Caco-2 (cell line): ENCODE measurements at regions of chr1 and their contacts with region 1.

Region 1: GRCh38 chr1:202034683-202035462 is 24.5 kb downstream of the ELF3 start:
- DNase-seq: peak; percentile 98 to 99
- H3K4me3 ChIP-seq: peak overlapping the region; percentile 26
- H3K4me3 Mint-ChIP-seq: peak overlapping the region; percentile 70
- H3K27ac Mint-ChIP-seq: peak overlapping the region; percentile 95
- H3K4me1 ChIP-seq: peaks cover 59% of the 10 kb centered on the region
- H3K4me1 Mint-ChIP-seq: peaks cover 48% of the 10 kb centered on the region
- H3K27me3 ChIP-seq: no peaks in the 10 kb centered on the region
- H3K27me3 Mint-ChIP-seq: no peaks in the 10 kb centered on the region
- CTCF ChIP-seq: no peak

Region 2: DNA sequence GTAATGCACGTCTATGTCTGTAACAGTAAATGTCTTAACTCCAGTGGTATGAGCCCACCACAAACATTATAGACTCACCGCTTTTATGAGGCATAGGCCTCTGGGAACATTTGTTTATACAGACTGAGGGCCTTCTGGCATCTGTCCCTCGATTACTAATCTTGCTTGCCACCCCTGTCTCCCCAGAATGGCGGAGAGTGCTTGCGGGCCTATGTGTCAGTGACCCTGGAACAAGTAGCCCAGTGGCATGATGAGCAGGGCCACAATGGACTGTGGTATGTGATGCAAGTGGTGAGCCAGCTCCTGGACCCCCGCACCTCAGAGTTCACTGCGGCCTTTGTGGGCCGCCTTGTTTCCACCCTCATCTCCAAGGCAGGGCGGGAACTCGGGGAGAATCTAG is 164.5 kb before region 1 on chr1:
- CTCF ChIA-PET with region 1: no interaction called
- POLR2A ChIA-PET with region 1: no interaction called
- intact Hi-C with region 1: no loop called
- DNase-seq: no peak
- H3K4me3 ChIP-seq: no peak overlapping the region
- H3K4me3 Mint-ChIP-seq: no peak overlapping the region
- H3K27ac Mint-ChIP-seq: no peak overlapping the region
- H3K4me1 ChIP-seq: no peaks in the 10 kb centered on the region
- H3K4me1 Mint-ChIP-seq: no peaks in the 10 kb centered on the region
- H3K27me3 ChIP-seq: no peaks in the 10 kb centered on the region
- H3K27me3 Mint-ChIP-seq: no peaks in the 10 kb centered on the region
- CTCF ChIP-seq: no peak

Region 3: DNA sequence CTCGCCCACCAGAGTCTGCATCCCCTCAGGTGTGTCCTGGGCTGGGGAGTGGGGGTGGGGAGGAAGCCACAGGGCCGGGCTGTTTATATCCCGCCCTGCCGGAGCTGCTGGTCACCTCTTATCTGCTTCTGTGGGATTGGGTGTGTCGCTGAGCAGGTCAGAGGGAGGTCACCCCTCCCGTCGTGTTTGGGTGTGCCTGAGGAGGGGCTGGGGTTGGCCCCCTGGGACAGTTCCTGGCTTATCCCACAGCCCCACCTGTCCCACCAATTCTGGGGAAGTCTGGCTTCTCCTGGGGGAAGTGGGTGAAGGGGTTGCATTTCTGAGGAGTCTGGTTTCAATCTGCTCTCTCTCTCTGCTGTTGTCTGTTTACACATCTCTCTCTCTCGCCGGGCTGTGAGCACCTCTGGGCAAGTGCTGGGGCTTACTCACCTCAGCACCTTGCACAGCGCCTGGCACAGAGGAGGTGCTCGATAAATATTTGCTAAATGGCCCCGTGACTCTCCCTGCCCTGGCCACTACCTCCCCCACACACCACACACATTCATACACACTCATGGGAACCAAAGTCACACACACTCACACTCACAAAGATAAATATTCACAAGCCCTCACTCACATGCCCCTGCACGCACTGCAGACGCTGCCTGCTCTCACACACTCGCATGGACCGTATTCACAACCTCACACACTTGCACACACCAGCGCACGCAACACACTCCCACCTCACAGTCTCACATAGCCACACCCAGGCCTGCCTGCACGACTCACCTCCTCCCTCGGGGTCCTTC is 16.2 kb before region 1 on chr1:
- CTCF ChIA-PET with region 1: interaction called, 7 read pairs
- POLR2A ChIA-PET with region 1: interaction called, 24 read pairs
- intact Hi-C with region 1: loop called (anchors 1 kb)
- DNase-seq: peak; percentile 87 to 94
- H3K4me3 ChIP-seq: peak overlapping the region; percentile 20
- H3K4me3 Mint-ChIP-seq: peak overlapping the region; percentile 65
- H3K27ac Mint-ChIP-seq: peak overlapping the region; percentile 71
- H3K4me1 ChIP-seq: peaks cover 71% of the 10 kb centered on the region
- H3K4me1 Mint-ChIP-seq: peaks cover 50% of the 10 kb centered on the region
- H3K27me3 ChIP-seq: no peaks in the 10 kb centered on the region
- H3K27me3 Mint-ChIP-seq: no peaks in the 10 kb centered on the region
- CTCF ChIP-seq: no peak

Region 4: GRCh38 chr1:202046227-202046801 is 11.4 kb after region 1 on chr1:
- CTCF ChIA-PET with region 1: interaction called, 5 read pairs
- POLR2A ChIA-PET with region 1: interaction called, 17 read pairs
- intact Hi-C with region 1: loop called (anchors 1 kb)
- DNase-seq: peak; percentile 63 to 71
- H3K4me3 ChIP-seq: no peak overlapping the region
- H3K4me3 Mint-ChIP-seq: no peak overlapping the region
- H3K27ac Mint-ChIP-seq: peak overlapping the region; percentile 48
- H3K4me1 ChIP-seq: peaks cover 63% of the 10 kb centered on the region
- H3K4me1 Mint-ChIP-seq: peaks cover 49% of the 10 kb centered on the region
- H3K27me3 ChIP-seq: no peaks in the 10 kb centered on the region
- H3K27me3 Mint-ChIP-seq: no peaks in the 10 kb centered on the region
- CTCF ChIP-seq: no peak

Region 5: DNA sequence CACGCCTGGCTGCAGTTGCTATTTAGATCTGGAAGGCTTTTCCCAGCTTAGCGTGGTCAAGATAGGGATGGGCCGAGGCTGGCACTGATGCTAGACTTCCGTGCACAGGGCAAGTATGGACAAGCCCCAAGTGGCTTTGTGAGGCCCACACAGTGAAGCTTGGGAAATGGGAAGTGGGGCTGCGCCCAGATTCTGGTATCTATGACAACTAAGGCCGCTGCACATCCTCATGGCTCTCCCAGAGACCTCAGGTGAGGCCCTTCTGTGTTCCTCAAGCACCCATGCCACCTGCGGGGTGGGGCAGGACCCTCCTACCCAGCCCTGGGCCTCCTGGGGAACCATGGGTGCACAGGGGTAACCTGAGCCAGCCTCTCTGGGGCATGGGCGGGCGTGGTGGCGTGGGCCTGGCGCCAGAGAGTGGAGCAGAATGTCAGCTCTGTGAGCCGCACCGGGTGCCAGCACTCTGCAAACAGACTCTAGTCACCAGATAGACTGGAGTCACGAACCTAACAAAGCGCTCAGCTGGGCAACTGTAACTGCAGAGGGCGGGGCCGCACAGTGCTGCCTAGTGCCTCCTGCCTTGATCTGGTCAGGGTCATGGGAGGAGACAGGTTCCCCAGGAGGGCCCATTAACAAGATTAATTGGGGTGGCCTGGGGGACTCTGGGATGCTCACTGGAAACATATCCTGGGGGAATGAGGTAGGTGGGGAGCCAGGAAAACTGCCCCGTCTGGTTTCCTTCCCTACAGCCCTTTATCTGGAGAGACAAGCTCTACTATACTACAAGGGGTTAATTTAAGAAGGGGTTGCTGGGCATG is 22.0 kb after region 1 on chr1:
- CTCF ChIA-PET with region 1: interaction called, 3 read pairs
- POLR2A ChIA-PET with region 1: no interaction called
- intact Hi-C with region 1: loop called (anchors 2 kb)
- DNase-seq: peak in 1 of 2 experiments; percentile 73
- H3K4me3 ChIP-seq: no peak overlapping the region
- H3K4me3 Mint-ChIP-seq: no peak overlapping the region
- H3K27ac Mint-ChIP-seq: peak overlapping the region; percentile 26
- H3K4me1 ChIP-seq: peaks cover 30% of the 10 kb centered on the region
- H3K4me1 Mint-ChIP-seq: peaks cover 25% of the 10 kb centered on the region
- H3K27me3 ChIP-seq: no peaks in the 10 kb centered on the region
- H3K27me3 Mint-ChIP-seq: no peaks in the 10 kb centered on the region
- CTCF ChIP-seq: no peak

Region 6: DNA sequence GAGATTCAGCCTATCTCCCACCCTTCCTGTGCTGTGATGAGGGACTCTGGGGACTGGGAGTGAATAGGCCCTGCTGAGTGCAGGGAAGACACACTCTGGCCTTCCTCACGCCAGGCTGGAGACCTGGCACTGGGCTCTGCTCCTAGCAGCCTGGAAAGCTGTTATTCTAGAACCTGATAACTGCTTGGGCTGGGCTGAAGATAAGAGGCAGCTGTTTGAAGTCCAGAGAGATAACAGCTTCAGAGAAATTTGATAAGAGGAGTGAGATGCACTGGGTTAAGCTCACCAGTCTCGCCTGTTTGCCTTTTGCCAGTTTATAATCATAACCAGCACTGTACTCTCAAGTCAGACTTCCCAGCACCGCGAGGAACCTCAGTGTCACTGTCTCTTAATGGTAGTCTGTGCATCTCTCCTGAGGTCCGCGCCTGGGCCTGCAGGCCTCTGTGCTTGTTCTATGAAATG is 41.2 kb after region 1 on chr1:
- CTCF ChIA-PET with region 1: interaction called, 3 read pairs
- POLR2A ChIA-PET with region 1: interaction called, 8 read pairs
- intact Hi-C with region 1: loop called (anchors 1 kb)
- DNase-seq: peak; percentile 83 to 89
- H3K4me3 ChIP-seq: no peak overlapping the region
- H3K4me3 Mint-ChIP-seq: peak overlapping the region; percentile 25
- H3K27ac Mint-ChIP-seq: peak overlapping the region; percentile 88
- H3K4me1 ChIP-seq: peaks cover 54% of the 10 kb centered on the region
- H3K4me1 Mint-ChIP-seq: peaks cover 46% of the 10 kb centered on the region
- H3K27me3 ChIP-seq: no peaks in the 10 kb centered on the region
- H3K27me3 Mint-ChIP-seq: no peaks in the 10 kb centered on the region
- CTCF ChIP-seq: no peak

Region 7: DNA sequence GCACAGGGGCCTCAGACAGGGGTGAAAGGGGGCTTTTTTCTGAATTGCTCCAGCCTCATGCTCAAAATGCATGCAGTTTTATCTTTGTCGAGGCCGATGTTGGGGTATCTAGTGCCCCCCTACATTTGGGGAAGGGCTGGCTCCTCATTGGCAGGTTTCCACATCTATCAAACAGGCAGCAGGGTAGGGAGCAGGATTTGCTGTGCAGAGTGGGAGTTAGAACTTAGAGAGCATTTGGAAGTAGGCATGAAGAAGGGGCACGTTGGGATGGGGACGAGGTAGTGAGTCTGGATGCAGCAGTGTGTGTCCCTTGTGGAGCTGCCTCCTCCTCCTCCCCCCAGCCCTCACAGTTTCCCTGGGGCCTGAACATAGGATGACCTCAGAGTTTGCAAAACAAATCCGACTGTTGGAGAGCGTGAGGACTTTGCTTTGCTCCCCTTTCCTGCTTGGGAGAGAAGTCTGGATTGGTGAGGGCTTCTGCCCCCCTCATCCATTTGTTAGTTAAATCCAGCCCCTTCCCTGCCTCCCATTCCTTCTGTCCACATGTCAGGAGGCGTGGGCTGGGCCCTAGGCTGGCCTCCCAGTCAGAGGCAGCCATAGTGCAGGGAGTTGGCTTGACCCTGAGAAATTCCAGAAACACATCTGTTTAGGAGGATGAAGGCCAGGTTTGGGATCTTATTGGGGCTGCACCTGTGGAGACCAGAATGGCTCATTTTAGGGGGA is 51.0 kb after region 1 on chr1:
- CTCF ChIA-PET with region 1: no interaction called
- POLR2A ChIA-PET with region 1: no interaction called
- intact Hi-C with region 1: loop called (anchors 2 kb)
- DNase-seq: peak; percentile 59 to 82
- H3K4me3 ChIP-seq: no peak overlapping the region
- H3K4me3 Mint-ChIP-seq: peak overlapping the region; percentile 7
- H3K27ac Mint-ChIP-seq: peak overlapping the region; percentile 88
- H3K4me1 ChIP-seq: peaks cover 60% of the 10 kb centered on the region
- H3K4me1 Mint-ChIP-seq: peaks cover 40% of the 10 kb centered on the region
- H3K27me3 ChIP-seq: no peaks in the 10 kb centered on the region
- H3K27me3 Mint-ChIP-seq: no peaks in the 10 kb centered on the region
- CTCF ChIP-seq: no peak

Region 8: DNA sequence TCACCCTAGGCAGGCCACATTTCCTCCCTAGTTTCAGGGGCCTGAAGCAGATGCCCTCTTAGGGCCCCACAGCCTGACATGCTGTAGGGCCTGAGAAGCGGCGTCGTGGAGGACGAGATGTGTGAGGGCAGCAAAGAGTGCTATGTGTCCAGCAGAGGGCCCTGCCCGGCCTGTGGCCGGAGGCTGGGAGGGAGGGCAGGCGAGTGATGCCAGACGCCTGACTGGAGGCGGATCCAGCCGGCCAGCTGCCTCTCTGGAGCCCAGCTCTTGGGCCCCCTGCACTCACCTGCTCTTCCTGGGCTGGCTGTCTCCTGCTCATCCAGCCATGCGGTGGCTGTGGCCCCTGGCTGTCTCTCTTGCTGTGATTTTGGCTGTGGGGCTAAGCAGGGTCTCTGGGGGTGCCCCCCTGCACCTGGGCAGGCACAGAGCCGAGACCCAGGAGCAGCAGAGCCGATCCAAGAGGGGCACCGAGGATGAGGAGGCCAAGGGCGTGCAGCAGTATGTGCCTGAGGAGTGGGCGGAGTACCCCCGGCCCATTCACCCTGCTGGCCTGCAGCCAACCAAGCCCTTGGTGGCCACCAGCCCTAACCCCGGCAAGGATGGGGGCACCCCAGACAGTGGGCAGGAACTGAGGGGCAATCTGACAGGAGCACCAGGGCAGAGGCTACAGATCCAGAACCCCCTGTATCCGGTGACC is 87.9 kb after region 1 on chr1 and contains the start of gene GPR37L1:
- CTCF ChIA-PET with region 1: no interaction called
- POLR2A ChIA-PET with region 1: no interaction called
- intact Hi-C with region 1: loop called (anchors 1 kb)
- DNase-seq: peak; percentile 71
- H3K4me3 ChIP-seq: no peak within 1 kb of the TSS
- H3K4me3 Mint-ChIP-seq: no peak within 1 kb of the TSS
- H3K27ac Mint-ChIP-seq: no peak within 1 kb of the TSS
- H3K4me1 ChIP-seq: peaks cover 16% of the 10 kb centered on the region
- H3K4me1 Mint-ChIP-seq: no peaks in the 10 kb centered on the region
- H3K27me3 ChIP-seq: no peaks in the 10 kb centered on the region
- H3K27me3 Mint-ChIP-seq: no peaks in the 10 kb centered on the region
- CTCF ChIP-seq: peak; percentile 56 to 75
- total RNA-seq, gene GPR37L1: 0.07 TPM in 2 replicates